HepG2 (cell line): ENCODE measurements at regions of chr6 and their contacts with region 1.

Region 1: GRCh38 chr6:12331956-12332749 is 42.0 kb downstream of the EDN1 start:
- DNase-seq: peak; percentile 90
- ATAC-seq: peak; percentile 76
- H3K4me3 ChIP-seq: no peak overlapping the region; a peak in 1 of 6 replicates
- H3K27ac ChIP-seq: peak overlapping the region; percentile 65
- H3K4me1 ChIP-seq: peaks cover 91% of the 10 kb centered on the region
- H3K27me3 ChIP-seq: no peaks in the 10 kb centered on the region
- CTCF ChIP-seq: no peak
- EP300 ChIP-seq: peak in 1 of 2 experiments; percentile 68; a peak in 1 of 4 replicates
- POLR2A ChIP-seq: no peak
- RAD21 ChIP-seq: no peak

Region 2: DNA sequence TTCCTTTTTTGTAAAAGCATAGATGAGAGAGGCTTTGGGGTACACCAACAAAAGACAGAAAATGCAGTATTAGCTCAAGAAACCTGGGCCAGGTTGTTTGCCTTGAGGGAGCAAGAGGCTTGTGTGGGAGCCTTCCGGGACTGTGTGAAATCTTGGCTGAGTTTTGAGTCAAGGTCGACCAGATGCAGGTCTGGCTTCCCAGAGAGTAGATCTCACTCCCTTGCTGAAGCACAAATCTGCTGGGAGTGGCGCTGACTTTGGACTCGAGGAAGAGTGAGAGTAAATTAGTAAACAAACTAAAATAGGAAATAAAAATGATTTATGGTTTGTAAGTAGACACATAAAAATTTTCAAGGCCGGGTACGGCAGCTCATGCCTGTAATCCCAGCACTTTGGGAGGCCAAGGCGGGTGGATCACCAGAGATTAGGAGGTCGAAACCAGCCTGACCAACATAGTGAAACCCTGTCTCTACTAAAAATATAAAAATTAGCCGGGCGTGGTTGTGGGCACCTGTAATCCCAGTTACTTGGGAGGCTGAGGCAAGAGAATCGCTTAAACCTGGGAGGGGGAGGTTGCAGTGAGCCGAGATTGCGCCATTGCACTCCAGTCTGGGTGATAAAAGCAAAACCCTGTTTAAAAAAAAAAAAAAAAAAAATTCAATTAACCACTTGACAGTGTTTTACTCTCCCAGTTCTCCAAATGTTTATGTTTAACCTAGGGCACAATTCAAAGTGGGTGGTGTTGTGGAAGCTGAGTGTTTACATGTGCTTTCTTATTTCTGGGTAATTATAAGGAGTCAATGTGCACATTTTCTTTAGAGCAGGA is 69.7 kb before region 1 on chr6:
- CTCF ChIA-PET with region 1: no interaction called
- POLR2A ChIA-PET with region 1: no interaction called
- in situ Hi-C with region 1: no loop called
- intact Hi-C with region 1: no loop called
- DNase-seq: no peak
- ATAC-seq: no peak
- H3K4me3 ChIP-seq: no peak overlapping the region
- H3K27ac ChIP-seq: no peak overlapping the region
- H3K4me1 ChIP-seq: no peaks in the 10 kb centered on the region
- H3K27me3 ChIP-seq: 0 out of 5 replicates have a peak, but pooled peaks cover 0 to 1% of the 10 kb centered on the region in 2 experiments
- CTCF ChIP-seq: no peak
- EP300 ChIP-seq: no peak
- POLR2A ChIP-seq: no peak
- RAD21 ChIP-seq: no peak

Region 3: DNA sequence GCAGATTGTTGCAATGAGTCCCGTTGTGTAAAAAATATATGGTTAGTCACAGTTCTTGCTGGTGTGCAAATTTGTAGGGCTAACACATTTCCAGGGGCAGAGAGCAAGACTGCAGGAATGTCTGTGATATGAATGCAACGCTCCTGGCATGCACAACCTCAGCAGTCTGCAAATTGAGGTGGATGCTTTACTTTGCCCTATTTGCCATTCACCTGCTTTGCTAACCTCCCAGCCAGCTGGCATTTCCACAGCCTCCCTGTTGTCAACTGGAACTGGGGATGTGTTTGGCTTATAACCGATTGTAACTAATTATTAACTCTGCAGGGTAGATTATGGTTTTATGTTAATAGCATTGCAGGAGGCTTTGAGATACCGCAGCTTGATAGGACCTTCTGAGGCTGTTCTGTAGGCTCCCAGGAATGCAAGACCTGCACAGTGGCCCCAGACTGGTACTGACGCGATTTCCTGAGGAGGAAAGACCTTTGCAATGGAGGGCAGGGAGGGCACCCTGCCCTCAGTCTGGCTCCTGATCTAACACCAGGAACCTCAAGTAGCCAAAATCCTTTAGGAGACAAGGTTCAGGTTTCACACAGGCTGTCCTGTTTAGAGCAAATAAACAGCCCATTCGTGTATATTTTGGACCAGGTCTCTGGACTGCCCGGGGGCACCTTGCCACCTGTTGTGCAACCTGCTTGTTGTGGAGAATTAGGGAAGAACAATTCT is 11.4 kb after region 1 on chr6:
- CTCF ChIA-PET with region 1: no interaction called
- POLR2A ChIA-PET with region 1: interaction called, 17 read pairs
- in situ Hi-C with region 1: no loop called
- intact Hi-C with region 1: no loop called
- DNase-seq: peak; percentile 90
- ATAC-seq: peak; percentile 79
- H3K4me3 ChIP-seq: peak overlapping the region in 1 of 3 experiments; percentile 23; a peak in 1 of 6 replicates
- H3K27ac ChIP-seq: peak overlapping the region; percentile 41
- H3K4me1 ChIP-seq: peaks cover 81% of the 10 kb centered on the region
- H3K27me3 ChIP-seq: no peaks in the 10 kb centered on the region
- CTCF ChIP-seq: no peak
- EP300 ChIP-seq: no peak; a peak in 1 of 4 replicates
- POLR2A ChIP-seq: no peak
- RAD21 ChIP-seq: no peak

Region 4: DNA sequence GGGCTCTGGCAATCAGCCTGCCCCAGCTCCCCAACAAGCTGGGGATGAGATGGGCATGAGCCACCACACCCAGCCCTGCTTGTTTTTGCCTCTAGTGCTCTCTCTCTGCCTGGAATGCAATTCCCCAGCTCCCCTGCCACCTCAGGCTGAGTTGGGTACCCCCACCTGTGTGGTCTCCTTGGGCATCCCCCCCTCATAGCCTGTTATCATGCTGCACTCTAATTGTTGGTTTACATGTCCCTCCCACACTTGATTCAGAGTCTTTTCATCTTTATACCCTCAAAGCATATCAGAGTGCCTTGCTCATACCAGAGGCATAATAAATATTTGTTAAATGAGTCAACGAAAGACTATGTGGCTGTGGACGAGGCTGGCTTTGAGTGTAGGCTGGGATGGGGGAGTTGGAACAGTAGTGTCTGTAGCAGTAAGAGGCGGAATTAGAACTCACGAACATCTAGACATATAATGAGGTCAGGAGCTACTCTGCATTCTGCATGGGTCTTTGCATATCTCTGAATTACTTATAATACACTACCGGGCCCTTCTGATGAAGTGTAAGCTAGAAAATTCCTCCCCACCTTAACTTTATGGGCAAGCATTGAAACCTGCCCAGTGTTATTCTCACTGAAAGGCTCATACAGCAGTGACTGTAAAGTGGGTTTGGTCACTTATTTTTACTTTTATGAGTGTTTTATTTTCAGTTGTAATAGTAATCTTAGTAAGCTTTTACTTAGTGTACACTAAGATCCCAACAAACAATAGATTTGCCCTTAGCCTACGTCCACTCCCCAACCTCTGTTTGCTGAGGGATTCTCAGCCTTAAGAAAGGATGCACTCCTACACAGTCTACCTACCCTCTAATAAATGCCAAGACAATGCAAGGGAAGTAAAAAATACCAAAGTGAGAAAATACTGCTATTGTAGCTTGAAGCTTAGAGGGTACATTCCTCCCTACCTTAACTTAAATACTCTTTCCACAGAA is 16.7 kb after region 1 on chr6:
- CTCF ChIA-PET with region 1: no interaction called
- POLR2A ChIA-PET with region 1: interaction called, 17 read pairs
- in situ Hi-C with region 1: no loop called
- intact Hi-C with region 1: no loop called
- DNase-seq: peak; percentile 98
- ATAC-seq: peak; percentile 95
- H3K4me3 ChIP-seq: no peak overlapping the region
- H3K27ac ChIP-seq: peak overlapping the region; percentile 15
- H3K4me1 ChIP-seq: peaks cover 43% of the 10 kb centered on the region
- H3K27me3 ChIP-seq: no peaks in the 10 kb centered on the region
- CTCF ChIP-seq: no peak
- EP300 ChIP-seq: peak; percentile 17 to 97; a peak in 2 of 4 replicates
- POLR2A ChIP-seq: no peak
- RAD21 ChIP-seq: no peak

Region 5: DNA sequence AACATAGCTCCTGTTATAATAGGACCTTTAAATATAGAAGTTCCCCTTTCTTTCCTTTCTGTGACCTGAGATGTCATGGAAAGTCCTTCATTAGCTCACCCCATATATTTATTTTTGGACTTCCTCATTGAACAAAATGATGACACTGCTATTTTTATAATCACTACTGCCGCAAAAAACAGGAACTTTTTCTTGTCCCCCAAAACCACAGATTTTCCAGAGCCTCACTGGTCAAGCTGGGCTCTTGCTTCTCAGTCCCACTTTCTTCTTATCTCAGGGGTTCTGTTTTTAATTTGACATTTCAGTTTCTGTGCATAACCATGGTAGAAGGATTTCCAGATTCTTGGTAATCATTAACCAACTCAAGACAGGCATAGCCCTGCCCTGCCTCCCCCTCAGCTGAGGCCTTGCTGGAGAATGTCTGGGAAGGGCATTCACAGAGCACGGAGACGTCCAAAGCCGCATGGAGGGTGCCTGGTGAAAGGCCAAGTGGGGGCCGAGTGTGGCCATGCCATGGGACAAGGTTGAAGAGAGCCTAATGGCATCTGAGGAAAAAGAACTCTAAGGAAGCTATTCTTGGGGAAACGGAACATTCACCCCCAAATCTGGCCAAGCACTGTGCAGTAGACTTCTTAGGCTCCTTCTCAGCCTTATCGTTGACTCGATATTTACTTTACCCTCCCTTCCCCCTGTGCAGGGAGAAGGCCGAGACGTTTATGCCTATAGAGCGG is 31.7 kb after region 1 on chr6:
- CTCF ChIA-PET with region 1: no interaction called
- POLR2A ChIA-PET with region 1: interaction called, 18 read pairs
- in situ Hi-C with region 1: no loop called
- intact Hi-C with region 1: no loop called
- DNase-seq: peak; percentile 52
- ATAC-seq: peak; percentile 74
- H3K4me3 ChIP-seq: 0 out of 6 replicates have a peak overlapping the region, but pooled peaks of 1 of the 3 experiments have one; percentile 18
- H3K27ac ChIP-seq: no peak overlapping the region
- H3K4me1 ChIP-seq: peaks cover 36% of the 10 kb centered on the region
- H3K27me3 ChIP-seq: no peaks in the 10 kb centered on the region
- CTCF ChIP-seq: no peak
- EP300 ChIP-seq: 0 out of 4 replicates have a peak, but pooled peaks of 1 of the 2 experiments have one; percentile 19
- POLR2A ChIP-seq: no peak
- RAD21 ChIP-seq: no peak